Activated CD4-positive, alpha-beta T cell treated with anti-CD3 and anti-CD28 coated beads, Interleukin-2, amount 10 ng/mL, durations not matched to agents 24 days and 14 days (primary cell): ENCODE measurements at regions of chr17 and their contacts with region 1.

Region 1: GRCh38 chr17:64635647-64636307 is 26.3 kb downstream of the SMURF2 start:
- DNase-seq: no peak
- H3K4me3 Mint-ChIP-seq: no peak overlapping the region
- H3K27ac Mint-ChIP-seq: peak overlapping the region; percentile 84
- H3K4me1 Mint-ChIP-seq: peaks cover 25% of the 10 kb centered on the region
- H3K27me3 Mint-ChIP-seq: no peaks in the 10 kb centered on the region

Region 2: GRCh38 chr17:64572638-64573154 is 63.1 kb before region 1 on chr17:
- intact Hi-C with region 1: loop called (anchors 2 kb)
- DNase-seq: peak; percentile 64
- H3K4me3 Mint-ChIP-seq: peak overlapping the region; percentile 2
- H3K27ac Mint-ChIP-seq: peak overlapping the region; percentile 84
- H3K4me1 Mint-ChIP-seq: peaks cover 10% of the 10 kb centered on the region
- H3K27me3 Mint-ChIP-seq: no peaks in the 10 kb centered on the region

Region 3: DNA sequence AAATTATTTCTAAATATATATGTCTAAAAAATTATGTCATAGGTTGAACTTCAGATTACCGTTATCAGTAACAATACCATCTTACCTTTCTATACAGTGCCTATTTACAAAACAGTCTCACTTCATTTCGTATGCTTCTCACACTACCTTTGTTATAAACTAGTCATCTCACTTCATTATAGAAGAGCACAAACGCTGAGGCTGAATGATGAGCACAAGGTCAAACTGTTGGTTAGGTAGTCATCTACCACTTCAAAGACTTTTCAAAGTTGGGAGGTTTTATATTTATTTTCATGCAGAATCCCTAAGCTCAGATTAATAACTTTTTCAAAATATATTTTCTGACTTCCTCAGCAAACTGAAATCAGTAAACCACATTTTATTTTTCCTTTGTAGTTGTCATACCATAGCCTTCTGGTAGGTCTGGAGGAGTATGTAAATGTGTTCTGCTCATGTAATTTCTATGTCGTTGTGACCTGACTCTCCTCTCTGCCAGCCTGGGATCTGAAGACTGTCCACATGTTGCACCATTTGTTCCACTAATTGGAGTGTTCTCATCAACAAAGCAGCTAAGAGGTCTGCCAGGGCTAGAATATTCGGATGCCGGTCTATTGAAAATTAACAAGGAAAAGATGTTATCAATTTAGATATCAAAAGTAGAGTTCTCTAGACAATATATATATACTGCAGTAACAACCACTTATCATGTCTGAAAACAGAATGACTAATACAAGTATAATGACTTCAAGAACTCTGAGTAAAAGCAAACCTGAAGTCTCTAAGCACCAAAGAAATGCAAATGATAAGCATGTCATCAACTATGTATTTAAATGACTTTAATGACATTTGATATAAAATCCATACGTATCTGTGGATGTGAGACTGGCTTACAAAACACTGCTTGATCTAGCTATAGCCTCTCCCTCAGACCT is 55.1 kb before region 1 on chr17:
- intact Hi-C with region 1: loop called (anchors 2 kb)
- DNase-seq: no peak
- H3K4me3 Mint-ChIP-seq: peak overlapping the region; percentile 33
- H3K27ac Mint-ChIP-seq: peak overlapping the region; percentile 96
- H3K4me1 Mint-ChIP-seq: peaks cover 14% of the 10 kb centered on the region
- H3K27me3 Mint-ChIP-seq: no peaks in the 10 kb centered on the region

Region 4: GRCh38 chr17:64608540-64608981 is 27.2 kb before region 1 on chr17:
- intact Hi-C with region 1: loop called (anchors 1 kb)
- DNase-seq: no peak
- H3K4me3 Mint-ChIP-seq: peak overlapping the region; percentile 32
- H3K27ac Mint-ChIP-seq: peak overlapping the region; percentile 78
- H3K4me1 Mint-ChIP-seq: peaks cover 22% of the 10 kb centered on the region
- H3K27me3 Mint-ChIP-seq: no peaks in the 10 kb centered on the region

Region 5: DNA sequence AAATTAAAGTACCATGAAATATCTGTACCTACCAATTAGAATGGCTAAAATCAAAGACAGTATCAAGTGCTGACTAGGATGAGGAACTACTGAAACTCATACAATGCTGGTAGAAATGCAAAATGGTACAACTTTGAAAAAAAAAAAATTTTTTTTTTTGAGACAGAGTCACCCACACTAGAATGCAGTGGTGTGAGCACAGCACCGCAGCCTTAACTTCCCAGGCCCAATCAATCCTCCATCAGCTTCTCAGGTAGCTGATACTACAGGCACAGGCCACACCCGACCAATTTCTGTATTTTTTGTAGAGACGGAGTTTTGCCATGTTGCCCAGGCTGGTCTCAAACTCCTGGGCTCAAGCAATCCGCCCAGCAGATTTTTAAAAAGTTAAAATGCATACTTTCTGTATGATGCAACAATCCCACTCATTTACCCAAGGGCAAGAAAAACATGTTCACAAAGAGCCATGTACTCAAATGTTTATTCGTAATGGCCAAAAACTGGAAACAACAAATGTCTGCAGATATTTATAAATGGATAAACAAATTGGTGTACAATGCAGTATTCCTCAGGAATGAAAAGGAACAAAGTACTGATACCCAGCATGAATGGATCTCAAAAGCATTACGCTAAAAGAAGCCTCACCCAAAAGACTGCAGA is 17.7 kb after region 1 on chr17:
- intact Hi-C with region 1: loop called (anchors 1 kb)
- DNase-seq: no peak
- H3K4me3 Mint-ChIP-seq: no peak overlapping the region
- H3K27ac Mint-ChIP-seq: no peak overlapping the region
- H3K4me1 Mint-ChIP-seq: peaks cover 26% of the 10 kb centered on the region
- H3K27me3 Mint-ChIP-seq: no peaks in the 10 kb centered on the region